Activated T-helper 2 cell treated with anti-CD3 and anti-CD28 coated beads, Interferon-gamma antibody, Interleukin-2, Interleukin-4, amounts not matched to agents 10 μg/mL and 5 μg/mL and 100 μg/mL, durations not matched to agents 14 hours and 24 hours and 36 hours (primary cell): ENCODE measurements at regions of chr11 and their contacts with region 1.

Region 1: DNA sequence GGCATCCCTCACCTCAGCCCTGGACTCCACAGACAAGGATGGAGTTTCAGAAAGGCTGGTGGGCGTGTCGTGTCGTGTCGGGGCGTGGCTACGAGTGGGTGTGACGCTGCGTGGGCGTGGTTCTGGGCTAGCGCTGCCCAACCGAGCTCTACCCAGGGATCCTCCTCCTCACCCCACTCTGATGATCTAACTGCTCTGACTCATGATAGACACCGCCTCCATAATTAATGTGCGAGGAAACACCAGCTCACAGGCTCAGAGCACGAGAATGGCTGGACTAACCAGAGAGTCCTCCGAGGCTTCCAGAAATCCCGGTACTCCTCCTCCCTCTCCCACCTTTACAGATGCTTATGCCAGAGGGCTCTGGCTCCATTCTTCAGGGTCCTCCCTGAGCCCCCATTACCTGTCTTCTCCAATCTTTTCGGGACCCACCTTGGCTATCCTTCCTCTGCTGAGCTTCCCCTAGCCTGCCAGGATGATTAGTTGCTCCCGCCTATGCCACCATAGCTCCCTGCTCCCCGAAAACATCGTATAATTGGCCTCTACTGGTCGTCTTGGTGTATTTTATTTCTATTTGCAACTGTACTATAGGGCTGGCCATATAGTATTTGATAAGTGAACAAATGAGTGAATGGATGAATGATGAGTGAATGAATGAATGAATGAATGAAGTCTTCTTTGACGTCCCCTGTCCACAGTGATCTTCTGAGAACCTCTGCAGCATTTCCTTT is 21.8 kb downstream of the TMPRSS13 start:
- DNase-seq: peak; percentile 79
- H3K4me3 Mint-ChIP-seq: peak overlapping the region; percentile 71
- H3K27ac Mint-ChIP-seq: peak overlapping the region; percentile 88
- H3K4me1 Mint-ChIP-seq: peaks cover 23% of the 10 kb centered on the region
- H3K27me3 Mint-ChIP-seq: no peaks in the 10 kb centered on the region

Region 2: GRCh38 chr11:117919781-117920221 is 12.4 kb after region 1 on chr11:
- intact Hi-C with region 1: loop called (anchors 1 kb)
- DNase-seq: no peak
- H3K4me3 Mint-ChIP-seq: no peak overlapping the region
- H3K27ac Mint-ChIP-seq: peak overlapping the region; percentile 34
- H3K4me1 Mint-ChIP-seq: peaks cover 10% of the 10 kb centered on the region
- H3K27me3 Mint-ChIP-seq: no peaks in the 10 kb centered on the region